PC-9 (cell line): ENCODE measurements at regions of chr11 and their contacts with region 1.

Region 1: DNA sequence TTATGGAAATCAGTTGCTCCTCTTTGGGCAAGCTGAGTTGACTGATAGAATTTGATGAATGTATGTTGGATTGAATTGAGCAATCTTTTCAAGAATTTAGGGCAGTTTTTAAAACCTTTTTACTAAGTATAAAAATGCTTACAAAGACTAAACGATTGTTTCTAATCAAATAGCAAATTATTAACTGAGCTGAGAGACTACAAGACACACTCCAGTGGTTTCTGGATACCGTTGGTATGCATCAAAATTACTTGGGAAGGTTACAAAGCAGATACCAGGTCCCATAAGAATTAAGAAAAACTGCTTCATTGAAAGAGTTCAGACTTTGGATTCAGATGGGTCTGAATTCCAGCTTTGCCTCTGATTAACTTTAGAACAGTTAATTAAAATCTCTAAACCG is 721.4 kb downstream of the FAM181B start:
- DNase-seq: no peak
- H3K4me3 ChIP-seq: no peak overlapping the region
- H3K27ac ChIP-seq: no peak overlapping the region
- H3K4me1 ChIP-seq: no peaks in the 10 kb centered on the region
- H3K27me3 ChIP-seq: no peaks in the 10 kb centered on the region
- CTCF ChIP-seq: no peak

Region 2: DNA sequence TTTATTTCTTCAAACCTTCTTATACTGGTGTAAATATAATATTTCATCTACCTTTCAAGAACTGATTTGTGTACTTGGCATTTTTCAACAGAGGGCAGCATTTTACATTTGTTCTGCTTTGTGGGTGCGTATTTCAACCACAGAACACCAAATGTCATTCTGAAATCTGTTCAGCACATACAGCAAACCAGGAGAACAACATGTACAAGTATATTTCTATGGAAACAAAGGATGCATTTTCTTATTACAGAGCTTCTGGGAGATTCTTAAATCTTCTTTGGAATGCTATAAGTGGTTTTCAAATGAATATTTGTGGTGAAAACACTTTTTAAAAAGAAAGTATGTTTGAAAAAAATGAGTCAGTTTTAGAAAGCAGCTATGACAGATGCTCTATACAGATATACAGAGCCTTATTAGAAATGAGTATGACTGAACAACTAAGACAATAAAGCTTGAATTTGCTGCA is 224.7 kb before region 1 on chr11:
- CTCF ChIA-PET with region 1: no interaction called
- POLR2A ChIA-PET with region 1: no interaction called
- intact Hi-C with region 1: loop called (anchors 5 kb)
- DNase-seq: no peak
- H3K4me3 ChIP-seq: no peak overlapping the region
- H3K27ac ChIP-seq: no peak overlapping the region
- H3K4me1 ChIP-seq: no peaks in the 10 kb centered on the region
- H3K27me3 ChIP-seq: no peaks in the 10 kb centered on the region
- CTCF ChIP-seq: no peak; the same call in 1 of the 2 replicates

Region 3: GRCh38 chr11:82092904-82093303 is 80.6 kb after region 1 on chr11:
- CTCF ChIA-PET with region 1: no interaction called
- POLR2A ChIA-PET with region 1: no interaction called
- intact Hi-C with region 1: no loop called
- DNase-seq: no peak
- H3K4me3 ChIP-seq: no peak overlapping the region
- H3K27ac ChIP-seq: no peak overlapping the region
- H3K4me1 ChIP-seq: no peaks in the 10 kb centered on the region
- H3K27me3 ChIP-seq: no peaks in the 10 kb centered on the region
- CTCF ChIP-seq: no peak

Region 4: GRCh38 chr11:82305123-82305522 is 292.8 kb after region 1 on chr11:
- CTCF ChIA-PET with region 1: no interaction called
- POLR2A ChIA-PET with region 1: no interaction called
- intact Hi-C with region 1: no loop called
- DNase-seq: no peak
- H3K4me3 ChIP-seq: no peak overlapping the region
- H3K27ac ChIP-seq: no peak overlapping the region
- H3K4me1 ChIP-seq: no peaks in the 10 kb centered on the region
- H3K27me3 ChIP-seq: no peaks in the 10 kb centered on the region
- CTCF ChIP-seq: no peak